T-cell (primary cell): ENCODE measurements at regions of chr15 and their contacts with region 1.

Region 1: GRCh38 chr15:41180206-41180789 is 50.3 kb downstream of the EXD1 start:
- DNase-seq: no peak
- ATAC-seq: no peak
- H3K4me3 ChIP-seq: no peak overlapping the region
- H3K4me3 Mint-ChIP-seq: no peak overlapping the region
- H3K27ac ChIP-seq: no peak overlapping the region
- H3K27ac Mint-ChIP-seq: no peak overlapping the region
- H3K4me1 ChIP-seq: no peaks in the 10 kb centered on the region
- H3K4me1 Mint-ChIP-seq: no peaks in the 10 kb centered on the region
- H3K27me3 ChIP-seq: no peaks in the 10 kb centered on the region
- H3K27me3 Mint-ChIP-seq: peaks cover 4 to 6% of the 10 kb centered on the region in 2 donors

Region 2: GRCh38 chr15:39997031-39997430 is 1183.3 kb before region 1 on chr15:
- CTCF ChIA-PET with region 1: interaction called in 1 of 2 experiments, 12 read pairs
- POLR2A ChIA-PET with region 1: no interaction called
- DNase-seq: no peak
- ATAC-seq: no peak
- H3K4me3 ChIP-seq: no peak overlapping the region
- H3K4me3 Mint-ChIP-seq: no peak overlapping the region
- H3K27ac ChIP-seq: no peak overlapping the region
- H3K27ac Mint-ChIP-seq: no peak overlapping the region
- H3K4me1 ChIP-seq: no peaks in the 10 kb centered on the region
- H3K4me1 Mint-ChIP-seq: no peaks in the 10 kb centered on the region
- H3K27me3 ChIP-seq: no peaks in the 10 kb centered on the region
- H3K27me3 Mint-ChIP-seq: no peaks in the 10 kb centered on the region

Region 3: GRCh38 chr15:40716165-40716564 is 464.1 kb before region 1 on chr15:
- CTCF ChIA-PET with region 1: no interaction called
- POLR2A ChIA-PET with region 1: interaction called in 1 of 2 experiments, 11 read pairs
- DNase-seq: no peak
- ATAC-seq: no peak
- H3K4me3 ChIP-seq: no peak overlapping the region
- H3K4me3 Mint-ChIP-seq: no peak overlapping the region
- H3K27ac ChIP-seq: no peak overlapping the region
- H3K27ac Mint-ChIP-seq: no peak overlapping the region
- H3K4me1 ChIP-seq: no peaks in the 10 kb centered on the region
- H3K4me1 Mint-ChIP-seq: no peaks in the 10 kb centered on the region
- H3K27me3 ChIP-seq: no peaks in the 10 kb centered on the region
- H3K27me3 Mint-ChIP-seq: no peaks in the 10 kb centered on the region

Region 4: DNA sequence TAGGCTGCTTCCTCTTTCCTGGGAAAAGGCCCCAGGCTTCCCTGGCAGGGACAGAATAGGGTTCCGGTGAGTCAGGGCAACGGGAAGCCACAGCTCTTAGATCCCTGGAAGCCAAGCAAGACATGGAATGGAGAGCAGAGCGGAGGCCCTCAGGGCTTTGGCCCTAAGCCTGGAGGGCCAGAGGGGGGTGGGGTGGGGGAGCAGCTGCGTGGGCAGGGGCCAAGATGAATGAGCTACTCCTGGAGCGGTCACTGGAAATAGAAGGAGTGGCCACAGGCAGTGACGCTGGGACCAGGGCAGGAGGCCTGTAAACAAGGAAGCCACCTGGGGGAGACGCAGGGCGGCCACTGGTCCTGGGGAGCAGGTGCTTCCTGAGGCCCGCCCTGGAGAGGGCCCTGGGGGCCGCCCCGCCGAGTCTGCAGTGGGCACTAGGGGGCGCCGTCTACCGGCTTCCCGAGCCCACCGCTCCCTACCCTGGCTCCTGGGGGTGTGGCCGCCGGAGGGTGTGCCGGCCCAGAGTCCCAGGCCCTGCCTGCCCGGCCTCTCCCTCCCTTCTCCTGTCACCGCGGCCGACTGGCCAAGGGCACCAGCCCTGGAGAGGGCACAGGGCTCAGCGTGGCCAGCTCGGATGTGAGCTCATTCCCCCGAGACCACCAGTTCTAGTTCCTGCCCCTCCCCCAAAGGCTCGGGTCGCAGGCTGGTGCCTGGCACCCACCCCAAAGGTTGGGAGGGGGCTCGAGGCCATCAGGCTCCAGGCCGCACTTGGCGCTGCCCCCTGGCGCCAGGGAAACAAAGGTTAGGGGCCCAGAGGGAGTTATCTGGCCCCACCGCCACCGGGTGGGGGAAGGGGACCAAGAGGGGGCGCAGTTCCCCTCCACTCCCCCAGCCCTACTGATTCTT is 274.0 kb before region 1 on chr15:
- CTCF ChIA-PET with region 1: interaction called, 8 to 17 read pairs
- POLR2A ChIA-PET with region 1: no interaction called
- DNase-seq: peak in 34 of 35 experiments; percentile 42 to 82 (median 62)
- ATAC-seq: peak; percentile 63 to 76 (median 70)
- H3K4me3 ChIP-seq: peak overlapping the region; percentile 76 to 77
- H3K4me3 Mint-ChIP-seq: peak overlapping the region; percentile 64 to 89 (median 82)
- H3K27ac ChIP-seq: peak overlapping the region; percentile 56
- H3K27ac Mint-ChIP-seq: peak overlapping the region; percentile 63 to 94
- H3K4me1 ChIP-seq: peaks cover 10 to 44% of the 10 kb centered on the region in 2 experiments
- H3K4me1 Mint-ChIP-seq: peaks cover 23 to 39% (median 38%) of the 10 kb centered on the region in 3 donors
- H3K27me3 ChIP-seq: no peaks in the 10 kb centered on the region
- H3K27me3 Mint-ChIP-seq: no peaks in the 10 kb centered on the region

Region 5: DNA sequence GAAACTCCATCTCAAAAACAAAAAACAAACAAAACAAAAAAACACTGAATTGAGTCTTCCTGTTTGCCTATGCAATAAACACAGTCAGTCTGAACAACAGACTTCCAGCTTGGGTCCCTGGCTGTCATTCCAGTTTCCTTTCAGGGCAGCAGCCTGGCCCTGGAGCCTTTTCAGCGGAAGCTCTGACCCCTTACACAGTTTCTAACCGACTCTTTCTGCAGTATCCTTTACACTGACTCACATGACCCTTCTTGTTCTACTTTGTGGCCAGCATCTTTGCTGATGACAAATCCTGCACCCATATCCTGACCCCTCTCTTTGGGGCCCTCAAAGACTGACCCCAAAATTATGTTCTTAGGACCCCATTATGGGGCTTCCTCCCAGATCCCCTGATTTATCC is 25.9 kb before region 1 on chr15:
- CTCF ChIA-PET with region 1: no interaction called
- POLR2A ChIA-PET with region 1: no interaction called
- DNase-seq: no peak
- ATAC-seq: no peak
- H3K4me3 ChIP-seq: no peak overlapping the region
- H3K4me3 Mint-ChIP-seq: no peak overlapping the region
- H3K27ac ChIP-seq: no peak overlapping the region
- H3K27ac Mint-ChIP-seq: no peak overlapping the region
- H3K4me1 ChIP-seq: no peaks in the 10 kb centered on the region
- H3K4me1 Mint-ChIP-seq: peaks cover 0 to 14% (median 8%) of the 10 kb centered on the region in 3 donors
- H3K27me3 ChIP-seq: peaks cover 0 to 8% of the 10 kb centered on the region in 2 experiments
- H3K27me3 Mint-ChIP-seq: no peaks in the 10 kb centered on the region

Region 6: GRCh38 chr15:41169781-41170180 is 10.5 kb before region 1 on chr15:
- CTCF ChIA-PET with region 1: no interaction called
- POLR2A ChIA-PET with region 1: no interaction called
- DNase-seq: no peak
- ATAC-seq: no peak
- H3K4me3 ChIP-seq: no peak overlapping the region
- H3K4me3 Mint-ChIP-seq: no peak overlapping the region
- H3K27ac ChIP-seq: no peak overlapping the region
- H3K27ac Mint-ChIP-seq: no peak overlapping the region
- H3K4me1 ChIP-seq: no peaks in the 10 kb centered on the region
- H3K4me1 Mint-ChIP-seq: no peaks in the 10 kb centered on the region
- H3K27me3 ChIP-seq: no peaks in the 10 kb centered on the region
- H3K27me3 Mint-ChIP-seq: peaks cover 0 to 2% of the 10 kb centered on the region in 2 donors

Region 7: DNA sequence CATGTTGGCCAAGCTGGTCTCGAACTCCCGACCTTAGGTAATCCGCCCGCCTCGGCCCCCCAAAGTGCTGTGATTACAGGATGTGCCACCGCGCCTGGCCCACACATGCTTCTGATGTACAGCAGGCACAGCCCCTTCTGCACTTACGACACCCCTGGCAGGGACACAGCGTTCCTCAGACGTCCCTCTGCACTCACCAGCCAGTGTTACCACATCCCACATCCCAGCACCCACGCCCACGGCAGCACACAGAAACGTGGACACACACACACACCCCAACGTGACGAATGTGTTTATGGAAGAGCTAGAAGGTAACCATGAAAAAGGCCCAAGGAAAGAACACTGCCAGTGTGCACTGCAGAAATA is 364.3 kb after region 1 on chr15:
- CTCF ChIA-PET with region 1: no interaction called
- POLR2A ChIA-PET with region 1: no interaction called
- DNase-seq: peak in 20 of 35 experiments; percentile 6 to 61 (median 22)
- ATAC-seq: peak in 1 of 4 experiments; percentile 8
- H3K4me3 ChIP-seq: peak overlapping the region; percentile 66 to 99
- H3K4me3 Mint-ChIP-seq: peak overlapping the region; percentile 92 to 94 (median 93)
- H3K27ac ChIP-seq: no peak overlapping the region
- H3K27ac Mint-ChIP-seq: peak overlapping the region; percentile 9 to 90
- H3K4me1 ChIP-seq: peaks cover 5 to 15% of the 10 kb centered on the region in 2 experiments
- H3K4me1 Mint-ChIP-seq: peaks cover 15 to 34% (median 17%) of the 10 kb centered on the region in 3 donors
- H3K27me3 ChIP-seq: peaks cover 0 to 5% of the 10 kb centered on the region in 2 experiments
- H3K27me3 Mint-ChIP-seq: no peaks in the 10 kb centered on the region